Breast epithelium (tissue), 4 donors: ENCODE measurements at regions of chr1 and their contacts with region 1.

Region 1: GRCh38 chr1:67347688-67348472 is 40.2 kb downstream of the IL12RB2 start:
- DNase-seq: no peak
- H3K4me3 ChIP-seq: no peak overlapping the region
- H3K27ac ChIP-seq: no peak overlapping the region
- H3K4me1 ChIP-seq: peaks cover 0 to 9% of the 10 kb centered on the region in 2 donors
- H3K27me3 ChIP-seq: no peaks in the 10 kb centered on the region
- CTCF ChIP-seq: peak; percentile 46 to 82 (median 72)
- POLR2A ChIP-seq: no peak

Region 2: GRCh38 chr1:67274623-67275325 is 73.1 kb before region 1 on chr1:
- intact Hi-C with region 1: no loop called
- DNase-seq: no peak
- H3K4me3 ChIP-seq: no peak overlapping the region
- H3K27ac ChIP-seq: no peak overlapping the region
- H3K4me1 ChIP-seq: no peaks in the 10 kb centered on the region
- H3K27me3 ChIP-seq: no peaks in the 10 kb centered on the region
- CTCF ChIP-seq: no peak
- POLR2A ChIP-seq: no peak

Region 3: GRCh38 chr1:67407498-67407897 is 59.6 kb after region 1 on chr1:
- intact Hi-C with region 1: no loop called
- DNase-seq: no peak
- H3K4me3 ChIP-seq: no peak overlapping the region
- H3K27ac ChIP-seq: no peak overlapping the region
- H3K4me1 ChIP-seq: no peaks in the 10 kb centered on the region
- H3K27me3 ChIP-seq: no peaks in the 10 kb centered on the region
- CTCF ChIP-seq: no peak
- POLR2A ChIP-seq: no peak

Region 4: DNA sequence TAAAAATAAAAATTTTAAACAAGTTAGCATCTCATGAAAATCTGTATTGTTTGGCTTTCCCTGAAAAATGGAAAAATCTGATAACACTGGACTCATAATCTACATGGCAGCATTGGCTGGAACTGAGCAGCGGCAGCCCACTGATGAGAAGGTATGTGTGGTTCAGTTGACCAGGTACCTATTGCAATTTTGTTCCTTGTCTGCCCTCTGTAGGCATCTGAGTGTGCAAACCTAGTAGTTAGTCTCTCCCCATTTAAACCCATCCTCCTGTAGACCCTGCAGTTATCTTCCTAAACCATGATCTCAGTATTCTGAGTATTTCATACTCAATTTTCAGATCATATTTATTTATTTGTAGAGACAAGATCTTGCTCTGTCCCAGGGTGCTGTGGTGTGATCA is 141.8 kb after region 1 on chr1:
- intact Hi-C with region 1: loop called (anchors 10 kb)
- DNase-seq: no peak
- H3K4me3 ChIP-seq: no peak overlapping the region
- H3K27ac ChIP-seq: no peak overlapping the region
- H3K4me1 ChIP-seq: no peaks in the 10 kb centered on the region
- H3K27me3 ChIP-seq: no peaks in the 10 kb centered on the region
- CTCF ChIP-seq: peak in 2 of 3 donors; percentile 17 to 34
- POLR2A ChIP-seq: no peak